Panc1 (cell line): ENCODE measurements at regions of chr5 and their contacts with region 1.

Region 1: GRCh38 chr5:163564321-163564938 is 59.0 kb downstream of the MAT2B start:
- DNase-seq: peak; percentile 53
- ATAC-seq: no peak
- H3K4me3 ChIP-seq: no peak overlapping the region
- H3K27ac ChIP-seq: no peak overlapping the region
- H3K4me1 ChIP-seq: peaks cover 8% of the 10 kb centered on the region
- H3K27me3 ChIP-seq: peaks cover 33% of the 10 kb centered on the region
- CTCF ChIP-seq: peak; percentile 84

Region 2: DNA sequence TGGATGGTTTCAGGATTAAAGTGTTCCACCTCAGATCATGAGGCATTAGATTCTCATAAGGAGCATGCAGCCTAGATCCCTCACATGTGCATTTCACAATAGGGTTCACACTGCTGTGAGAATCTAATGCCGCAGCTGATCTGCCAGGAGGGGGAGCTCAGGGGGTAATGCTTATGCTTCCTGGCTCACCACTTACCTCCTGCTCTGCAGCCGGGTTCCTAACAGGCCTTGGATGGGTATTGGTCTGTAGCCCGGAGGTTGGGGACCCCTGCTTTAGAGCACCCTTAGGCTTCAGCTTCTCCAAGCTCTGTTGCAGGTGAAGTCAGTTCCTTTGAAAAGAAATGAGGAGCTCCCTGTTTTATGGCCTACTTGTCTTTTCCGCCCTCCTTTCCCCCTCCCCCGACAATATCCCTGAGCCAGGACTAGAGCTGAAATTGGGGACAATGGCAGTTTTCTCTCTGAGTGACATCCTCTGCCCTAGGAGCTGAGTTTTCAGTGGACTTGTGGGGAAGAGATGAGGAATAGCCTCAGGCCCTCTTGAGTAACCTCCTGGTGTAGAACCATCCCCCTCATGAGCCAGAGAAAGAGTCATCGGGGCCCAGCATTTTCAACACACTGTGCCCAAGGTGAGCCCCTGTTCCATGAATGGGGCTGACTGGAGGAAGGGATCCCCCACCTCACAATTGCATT is 75.2 kb before region 1 on chr5:
- CTCF ChIA-PET with region 1: no interaction called
- POLR2A ChIA-PET with region 1: no interaction called
- in situ Hi-C with region 1: no loop called
- intact Hi-C with region 1: no loop called
- DNase-seq: no peak
- ATAC-seq: peak; percentile 75
- H3K4me3 ChIP-seq: no peak overlapping the region
- H3K27ac ChIP-seq: no peak overlapping the region
- H3K4me1 ChIP-seq: no peaks in the 10 kb centered on the region
- H3K27me3 ChIP-seq: no peaks in the 10 kb centered on the region
- CTCF ChIP-seq: peak; percentile 45

Region 3: GRCh38 chr5:163695830-163696578 is 131.6 kb after region 1 on chr5:
- CTCF ChIA-PET with region 1: no interaction called
- POLR2A ChIA-PET with region 1: no interaction called
- in situ Hi-C with region 1: no loop called
- intact Hi-C with region 1: loop called (anchors 5 kb)
- DNase-seq: peak; percentile 42
- ATAC-seq: peak; percentile 98
- H3K4me3 ChIP-seq: no peak overlapping the region
- H3K27ac ChIP-seq: no peak overlapping the region
- H3K4me1 ChIP-seq: no peaks in the 10 kb centered on the region
- H3K27me3 ChIP-seq: no peaks in the 10 kb centered on the region; the same call in 1 of the 2 replicates
- CTCF ChIP-seq: peak; percentile 82

Region 4: GRCh38 chr5:164013077-164013670 is 448.7 kb after region 1 on chr5:
- CTCF ChIA-PET with region 1: interaction called, 3 read pairs
- POLR2A ChIA-PET with region 1: no interaction called
- in situ Hi-C with region 1: no loop called
- intact Hi-C with region 1: loop called (anchors 5 kb)
- DNase-seq: peak; percentile 55
- ATAC-seq: peak; percentile 75
- H3K4me3 ChIP-seq: no peak overlapping the region
- H3K27ac ChIP-seq: no peak overlapping the region
- H3K4me1 ChIP-seq: no peaks in the 10 kb centered on the region
- H3K27me3 ChIP-seq: no peaks in the 10 kb centered on the region
- CTCF ChIP-seq: peak; percentile 67; the same call in 1 of the 2 replicates

Region 5: GRCh38 chr5:164475339-164475977 is 911.0 kb after region 1 on chr5:
- CTCF ChIA-PET with region 1: no interaction called
- POLR2A ChIA-PET with region 1: no interaction called
- in situ Hi-C with region 1: no loop called
- intact Hi-C with region 1: loop called (anchors 10 kb)
- DNase-seq: no peak
- ATAC-seq: no peak
- H3K4me3 ChIP-seq: no peak overlapping the region
- H3K27ac ChIP-seq: no peak overlapping the region
- H3K4me1 ChIP-seq: no peaks in the 10 kb centered on the region
- H3K27me3 ChIP-seq: no peaks in the 10 kb centered on the region
- CTCF ChIP-seq: peak; percentile 62; the same call in 1 of the 2 replicates

Region 6: GRCh38 chr5:164504141-164504772 is 939.8 kb after region 1 on chr5:
- CTCF ChIA-PET with region 1: no interaction called
- POLR2A ChIA-PET with region 1: no interaction called
- in situ Hi-C with region 1: no loop called
- intact Hi-C with region 1: loop called (anchors 1 kb)
- DNase-seq: peak; percentile 36
- ATAC-seq: 0 out of 2 replicates have a peak, but pooled peaks have one; percentile 56
- H3K4me3 ChIP-seq: no peak overlapping the region
- H3K27ac ChIP-seq: no peak overlapping the region
- H3K4me1 ChIP-seq: no peaks in the 10 kb centered on the region
- H3K27me3 ChIP-seq: no peaks in the 10 kb centered on the region
- CTCF ChIP-seq: peak; percentile 80

Region 7: GRCh38 chr5:164672931-164673694 is 1108.7 kb after region 1 on chr5:
- CTCF ChIA-PET with region 1: no interaction called
- POLR2A ChIA-PET with region 1: no interaction called
- in situ Hi-C with region 1: no loop called
- intact Hi-C with region 1: loop called (anchors 5 kb)
- DNase-seq: no peak
- ATAC-seq: no peak
- H3K4me3 ChIP-seq: no peak overlapping the region
- H3K27ac ChIP-seq: no peak overlapping the region
- H3K4me1 ChIP-seq: no peaks in the 10 kb centered on the region
- H3K27me3 ChIP-seq: no peaks in the 10 kb centered on the region
- CTCF ChIP-seq: peak; percentile 29; the same call in 1 of the 2 replicates

Region 8: DNA sequence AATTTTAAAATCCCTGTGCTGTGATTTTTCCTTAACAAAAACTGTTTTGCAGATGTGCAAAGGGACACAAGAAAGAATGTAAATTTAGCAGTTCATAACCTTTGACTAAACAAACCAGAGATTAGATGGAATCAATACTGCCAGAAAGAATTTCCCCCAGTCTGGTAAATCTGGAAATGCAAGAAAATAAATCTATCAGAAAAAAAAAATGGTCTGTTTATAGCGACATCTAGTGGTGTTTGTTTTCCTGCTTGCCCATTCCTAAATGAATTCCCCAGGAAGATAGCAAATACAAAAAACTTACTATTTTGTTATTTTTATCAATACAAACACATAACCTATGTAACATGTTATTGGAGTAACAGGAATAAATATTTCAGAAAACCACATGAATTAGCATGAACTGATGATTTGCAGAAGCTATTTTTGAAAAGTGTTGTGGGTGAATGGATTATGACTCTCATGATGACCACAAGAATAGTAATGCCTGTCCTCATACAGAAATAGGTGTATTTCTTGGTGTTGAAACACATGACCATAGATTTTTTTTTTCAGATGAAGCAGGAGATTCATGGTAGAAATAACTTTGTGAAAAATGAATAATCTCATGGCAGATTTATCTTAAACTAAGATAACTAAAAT is 1644.8 kb after region 1 on chr5:
- CTCF ChIA-PET with region 1: no interaction called
- POLR2A ChIA-PET with region 1: no interaction called
- in situ Hi-C with region 1: no loop called
- intact Hi-C with region 1: loop called (anchors 10 kb)
- DNase-seq: peak; percentile 12
- ATAC-seq: no peak
- H3K4me3 ChIP-seq: no peak overlapping the region
- H3K27ac ChIP-seq: no peak overlapping the region
- H3K4me1 ChIP-seq: no peaks in the 10 kb centered on the region
- H3K27me3 ChIP-seq: no peaks in the 10 kb centered on the region
- CTCF ChIP-seq: peak; percentile 77; the same call in 1 of the 2 replicates